ENCODE measurements at regions of chr1 and their contacts with region 1.

Region 1: DNA sequence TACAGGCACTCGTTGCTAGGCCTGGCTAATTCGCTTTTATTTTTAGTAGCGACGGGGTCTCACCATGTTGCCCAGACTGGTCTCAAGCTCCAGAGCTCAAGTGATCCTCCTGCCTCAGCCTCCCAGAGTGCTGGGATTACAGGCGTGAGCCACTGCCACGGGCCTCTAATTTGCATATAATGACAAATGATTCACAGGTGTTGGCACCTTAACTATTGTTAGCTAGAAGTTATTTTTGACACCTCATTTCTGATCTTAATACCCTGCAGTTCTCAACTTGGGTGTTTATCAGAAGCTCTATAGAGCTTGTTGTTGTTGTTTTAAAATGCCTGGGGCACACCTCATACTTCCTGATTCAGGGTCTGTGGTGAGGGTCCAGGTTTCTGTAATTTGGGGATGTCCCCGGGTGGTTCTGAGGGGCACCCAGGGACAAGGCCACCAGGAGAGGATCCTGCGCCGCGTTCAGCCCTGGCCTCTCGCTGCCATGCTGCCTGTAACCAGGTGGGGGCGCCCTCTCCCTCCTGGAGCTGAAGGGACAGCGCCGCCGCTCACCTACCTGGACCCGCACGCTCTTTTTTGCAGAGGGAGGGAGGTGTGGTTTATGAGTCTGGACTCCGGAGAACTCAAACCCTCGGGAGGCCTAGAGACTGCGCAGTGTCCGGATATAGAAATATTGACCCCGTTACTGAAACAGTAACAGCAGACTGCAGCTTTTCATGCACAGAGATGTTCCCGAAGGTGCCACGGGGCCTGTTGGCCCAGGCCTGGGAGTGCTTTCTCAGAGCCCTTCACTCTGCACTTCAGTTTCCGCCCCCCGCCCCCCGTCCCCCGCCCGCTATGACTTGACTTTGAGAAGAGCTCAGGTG is 23.0 kb upstream of the NEK2 start:
- DNase-seq: peak; percentile 92
- ATAC-seq: peak; percentile 95
- H3K4me3 Mint-ChIP-seq: peak overlapping the region; percentile 33
- H3K27ac Mint-ChIP-seq: no peak overlapping the region
- H3K4me1 Mint-ChIP-seq: peaks cover 24% of the 10 kb centered on the region
- H3K27me3 Mint-ChIP-seq: peaks cover 1% of the 10 kb centered on the region
- CTCF ChIP-seq: peak; percentile 95

Region 2: GRCh38 chr1:211711315-211711705 is 12.9 kb after region 1 on chr1:
- CTCF ChIA-PET with region 1: interaction called, 29 read pairs
- POLR2A ChIA-PET with region 1: no interaction called
- intact Hi-C with region 1: no loop called
- DNase-seq: no peak
- ATAC-seq: no peak
- H3K4me3 Mint-ChIP-seq: no peak overlapping the region
- H3K27ac Mint-ChIP-seq: no peak overlapping the region
- H3K4me1 Mint-ChIP-seq: no peaks in the 10 kb centered on the region
- H3K27me3 Mint-ChIP-seq: no peaks in the 10 kb centered on the region
- CTCF ChIP-seq: no peak

Region 3: GRCh38 chr1:211735208-211736170 is 37.1 kb after region 1 on chr1:
- CTCF ChIA-PET with region 1: interaction called, 31 read pairs
- POLR2A ChIA-PET with region 1: no interaction called
- intact Hi-C with region 1: loop called (anchors 2 kb)
- DNase-seq: no peak
- ATAC-seq: no peak
- H3K4me3 Mint-ChIP-seq: no peak overlapping the region
- H3K27ac Mint-ChIP-seq: no peak overlapping the region
- H3K4me1 Mint-ChIP-seq: peaks cover 38% of the 10 kb centered on the region
- H3K27me3 Mint-ChIP-seq: no peaks in the 10 kb centered on the region
- CTCF ChIP-seq: no peak

Region 4: GRCh38 chr1:211761400-211761799 is 63.0 kb after region 1 on chr1:
- CTCF ChIA-PET with region 1: interaction called, 13 read pairs
- POLR2A ChIA-PET with region 1: no interaction called
- intact Hi-C with region 1: no loop called
- DNase-seq: no peak
- ATAC-seq: no peak
- H3K4me3 Mint-ChIP-seq: no peak overlapping the region
- H3K27ac Mint-ChIP-seq: no peak overlapping the region
- H3K4me1 Mint-ChIP-seq: no peaks in the 10 kb centered on the region
- H3K27me3 Mint-ChIP-seq: no peaks in the 10 kb centered on the region
- CTCF ChIP-seq: no peak

Region 5: DNA sequence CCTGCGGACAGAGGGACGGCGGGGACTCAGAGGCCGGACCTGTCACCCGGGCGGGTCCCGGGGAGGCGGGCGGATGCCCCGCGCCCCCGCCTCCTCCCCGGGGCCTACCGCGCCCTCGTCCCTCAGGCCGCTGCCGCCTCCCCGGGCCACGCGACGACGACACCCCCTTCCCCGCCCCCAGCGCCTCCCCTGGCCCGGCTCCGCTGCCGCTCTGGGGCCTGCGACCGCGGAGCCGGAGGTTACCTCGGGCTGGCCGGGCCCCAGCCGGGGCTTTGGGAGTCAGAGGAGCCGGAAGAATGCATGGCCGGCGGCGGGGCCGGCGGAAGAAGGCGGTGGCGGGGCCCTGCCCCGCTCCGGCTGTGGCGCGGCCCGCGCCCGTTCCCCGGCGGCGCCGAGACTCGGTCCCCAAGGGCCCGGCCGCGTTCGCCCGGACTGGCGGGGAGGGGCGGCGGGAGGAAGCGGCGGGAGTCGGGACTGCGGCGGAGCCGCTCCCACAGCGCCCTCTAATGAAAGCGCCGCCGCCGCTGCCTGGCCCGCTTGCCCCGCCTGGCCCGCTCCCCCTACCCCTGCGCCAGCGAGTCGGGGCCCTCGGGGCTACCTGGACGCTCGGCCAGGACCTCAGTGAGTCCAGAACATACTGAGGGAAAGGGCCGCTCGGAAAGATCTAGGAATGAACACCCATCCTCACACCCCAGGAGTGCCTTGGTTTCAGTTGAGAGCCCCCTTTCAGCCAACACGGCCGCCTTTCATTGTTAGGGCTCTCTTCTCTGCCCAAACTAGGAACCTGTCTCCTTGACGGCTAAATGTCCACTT is 132.1 kb after region 1 on chr1 and contains the start of gene LPGAT1:
- CTCF ChIA-PET with region 1: interaction called, 14 read pairs
- POLR2A ChIA-PET with region 1: no interaction called
- intact Hi-C with region 1: loop called (anchors 5 kb)
- DNase-seq: peak; percentile 74
- ATAC-seq: peak; percentile 74
- H3K4me3 Mint-ChIP-seq: peak within 1 kb of the TSS; percentile 75
- H3K27ac Mint-ChIP-seq: peak within 1 kb of the TSS; percentile 86
- H3K4me1 Mint-ChIP-seq: peaks cover 61% of the 10 kb centered on the region
- H3K27me3 Mint-ChIP-seq: no peaks in the 10 kb centered on the region
- CTCF ChIP-seq: peak; percentile 66
- total RNA-seq, gene LPGAT1: 16.5 to 16.7 TPM

Region 6: DNA sequence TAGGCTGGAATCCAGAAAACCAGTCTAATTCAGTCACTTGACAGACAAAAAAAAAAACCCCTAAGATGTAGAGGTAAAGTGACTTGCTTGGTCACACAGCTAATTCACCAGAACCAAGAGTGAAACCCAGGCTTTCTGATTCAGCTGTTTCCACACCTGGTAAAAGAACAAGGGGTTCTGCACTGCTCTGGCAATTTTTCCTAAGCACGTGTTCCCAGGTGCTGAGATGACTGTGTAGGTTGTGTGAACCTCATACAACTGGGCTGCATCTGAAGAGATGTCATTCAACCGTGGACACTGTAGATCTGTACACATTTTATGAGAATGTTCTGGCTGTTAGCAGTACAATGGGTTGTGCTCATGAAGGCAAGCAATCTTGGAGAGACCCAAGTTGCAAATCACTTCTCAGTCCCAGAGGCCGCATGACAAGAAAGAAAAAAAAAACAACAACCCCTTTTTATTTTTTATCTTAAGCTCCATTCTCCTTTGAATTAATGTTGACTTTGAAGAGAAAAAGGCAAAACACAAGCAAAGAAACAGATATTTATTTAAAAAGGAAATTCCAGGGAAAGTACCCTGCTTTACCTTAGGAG is 241.6 kb after region 1 on chr1:
- CTCF ChIA-PET with region 1: interaction called, 10 read pairs
- POLR2A ChIA-PET with region 1: no interaction called
- intact Hi-C with region 1: loop called (anchors 10 kb)
- DNase-seq: peak; percentile 81
- ATAC-seq: peak; percentile 57
- H3K4me3 Mint-ChIP-seq: no peak overlapping the region
- H3K27ac Mint-ChIP-seq: no peak overlapping the region
- H3K4me1 Mint-ChIP-seq: peaks cover 48% of the 10 kb centered on the region
- H3K27me3 Mint-ChIP-seq: no peaks in the 10 kb centered on the region
- CTCF ChIP-seq: no peak